ENCODE measurements at regions of chr12 and their contacts with region 1.

Region 1: DNA sequence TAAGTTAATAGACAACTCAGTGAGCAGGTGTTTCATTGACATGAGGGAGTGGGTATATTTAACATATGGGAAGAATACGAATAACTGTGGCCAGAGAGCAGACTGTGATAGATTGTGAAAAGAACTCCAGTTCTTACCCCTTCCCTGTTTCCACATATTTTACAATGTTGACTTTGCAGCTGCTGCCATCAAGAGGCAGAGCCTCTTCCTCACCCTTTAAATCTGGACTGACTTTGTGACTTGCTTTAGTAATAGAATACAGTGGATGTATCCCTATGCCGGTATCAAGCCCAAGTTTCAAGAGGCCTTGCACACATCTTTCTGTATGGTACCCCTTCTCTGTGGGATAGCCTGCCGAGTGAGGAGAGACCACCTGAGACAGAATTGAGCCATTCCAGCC is 356.7 kb downstream of the ETNK1 start:
- DNase-seq: no peak
- ATAC-seq: peak in 1 of 8 donors; percentile 37
- H3K4me3 ChIP-seq: no peak overlapping the region
- H3K27ac ChIP-seq: no peak overlapping the region
- H3K4me1 ChIP-seq: no peaks in the 10 kb centered on the region
- H3K27me3 ChIP-seq: no peaks in the 10 kb centered on the region
- CTCF ChIP-seq: peak in 3 of 9 donors; percentile 6 to 15 (median 13)

Region 2: DNA sequence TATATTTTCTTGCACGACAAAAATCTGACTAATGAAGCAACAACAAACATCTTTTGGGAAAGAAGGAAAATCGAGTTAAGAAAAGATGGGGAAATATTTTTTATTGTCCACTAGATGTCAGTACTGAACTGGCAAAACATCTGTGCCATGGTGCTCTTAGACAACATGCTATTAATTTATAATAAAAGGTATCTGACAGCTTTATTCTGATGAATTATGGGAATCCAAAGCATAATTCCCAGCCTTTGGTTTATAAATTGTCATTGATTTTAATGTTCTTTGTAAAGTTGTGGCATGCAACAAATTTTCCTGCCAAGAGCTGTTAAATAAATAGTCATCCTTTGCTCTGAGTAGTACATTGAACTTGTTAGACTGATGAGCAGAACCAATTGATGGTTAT is 125.5 kb before region 1 on chr12:
- intact Hi-C with region 1: loop called in 3 of 10 experiments (anchors 5 to 10 kb)
- DNase-seq: no peak
- ATAC-seq: no peak
- H3K4me3 ChIP-seq: no peak overlapping the region
- H3K27ac ChIP-seq: no peak overlapping the region
- H3K4me1 ChIP-seq: no peaks in the 10 kb centered on the region
- H3K27me3 ChIP-seq: peaks cover 0 to 7% (median 0%) of the 10 kb centered on the region in 7 donors
- CTCF ChIP-seq: peak; percentile 21 to 70 (median 59)